Spleen (tissue), 13 donors: ENCODE measurements at regions of chr6 and their contacts with region 1.

Region 1: GRCh38 chr6:137799950-137800568 is 67.0 kb upstream of the TNFAIP3 start:
- DNase-seq: no peak
- H3K4me3 ChIP-seq: no peak overlapping the region
- H3K27ac ChIP-seq: no peak overlapping the region
- H3K4me1 ChIP-seq: peaks cover 0 to 34% (median 14%) of the 10 kb centered on the region in 6 donors
- H3K27me3 ChIP-seq: no peaks in the 10 kb centered on the region
- CTCF ChIP-seq: peak in 10 of 11 experiments; percentile 30 to 76 (median 64)
- POLR2A ChIP-seq: no peak

Region 2: GRCh38 chr6:137536104-137536773 is 263.8 kb before region 1 on chr6:
- intact Hi-C with region 1: no loop called
- DNase-seq: no peak
- H3K4me3 ChIP-seq: no peak overlapping the region
- H3K27ac ChIP-seq: peak overlapping the region in 1 of 8 donors; percentile 29
- H3K4me1 ChIP-seq: no peaks in the 10 kb centered on the region
- H3K27me3 ChIP-seq: peaks cover 0 to 54% (median 3%) of the 10 kb centered on the region in 7 donors
- CTCF ChIP-seq: no peak
- POLR2A ChIP-seq: no peak

Region 3: DNA sequence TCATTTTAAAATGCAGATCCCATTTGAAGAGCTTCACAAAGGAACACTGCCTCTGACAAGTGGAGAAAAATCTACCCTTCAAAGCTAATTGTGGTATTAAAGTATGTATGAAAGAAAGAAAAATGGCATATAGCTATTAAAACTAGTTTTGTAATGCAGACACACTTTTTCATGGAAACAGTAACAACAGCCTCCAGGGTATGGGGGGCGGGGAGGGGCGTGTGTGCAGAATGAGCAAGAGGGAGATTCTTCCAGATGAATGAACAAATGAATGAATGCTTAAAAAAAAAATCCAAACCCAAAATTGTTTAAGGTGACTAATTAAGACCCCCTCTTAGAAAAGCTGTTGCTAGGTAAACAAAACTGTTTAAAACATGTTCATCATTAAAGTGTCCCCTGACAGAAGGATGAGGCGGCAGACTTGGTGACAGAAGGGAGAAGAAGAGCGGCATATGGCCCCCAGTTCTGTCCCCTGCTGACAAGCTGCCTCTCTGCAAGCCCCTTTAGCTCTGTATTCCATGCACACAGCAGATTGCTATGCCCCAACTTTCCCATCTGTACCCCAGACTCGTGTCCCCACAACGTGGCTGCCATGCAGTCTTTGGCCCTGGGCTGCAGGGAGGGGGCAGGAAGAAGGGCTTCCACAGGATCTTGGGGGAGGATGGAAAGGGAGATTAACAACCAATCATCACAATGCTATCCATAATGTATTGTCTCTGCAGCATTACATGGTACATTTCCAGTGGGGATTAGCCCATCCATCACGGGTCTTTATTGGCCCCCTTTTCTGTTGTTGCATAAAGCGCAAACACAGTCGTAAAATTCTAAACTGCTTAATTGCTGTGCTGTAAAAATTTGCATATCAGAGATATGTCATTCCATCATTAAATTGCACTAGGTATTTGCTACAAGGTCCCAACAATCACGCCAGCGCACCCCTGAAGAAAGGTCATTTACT is 197.5 kb before region 1 on chr6:
- intact Hi-C with region 1: no loop called
- DNase-seq: no peak
- H3K4me3 ChIP-seq: no peak overlapping the region
- H3K27ac ChIP-seq: no peak overlapping the region
- H3K4me1 ChIP-seq: no peaks in the 10 kb centered on the region
- H3K27me3 ChIP-seq: peaks cover 0 to 50% (median 0%) of the 10 kb centered on the region in 7 donors
- CTCF ChIP-seq: no peak
- POLR2A ChIP-seq: no peak

Region 4: DNA sequence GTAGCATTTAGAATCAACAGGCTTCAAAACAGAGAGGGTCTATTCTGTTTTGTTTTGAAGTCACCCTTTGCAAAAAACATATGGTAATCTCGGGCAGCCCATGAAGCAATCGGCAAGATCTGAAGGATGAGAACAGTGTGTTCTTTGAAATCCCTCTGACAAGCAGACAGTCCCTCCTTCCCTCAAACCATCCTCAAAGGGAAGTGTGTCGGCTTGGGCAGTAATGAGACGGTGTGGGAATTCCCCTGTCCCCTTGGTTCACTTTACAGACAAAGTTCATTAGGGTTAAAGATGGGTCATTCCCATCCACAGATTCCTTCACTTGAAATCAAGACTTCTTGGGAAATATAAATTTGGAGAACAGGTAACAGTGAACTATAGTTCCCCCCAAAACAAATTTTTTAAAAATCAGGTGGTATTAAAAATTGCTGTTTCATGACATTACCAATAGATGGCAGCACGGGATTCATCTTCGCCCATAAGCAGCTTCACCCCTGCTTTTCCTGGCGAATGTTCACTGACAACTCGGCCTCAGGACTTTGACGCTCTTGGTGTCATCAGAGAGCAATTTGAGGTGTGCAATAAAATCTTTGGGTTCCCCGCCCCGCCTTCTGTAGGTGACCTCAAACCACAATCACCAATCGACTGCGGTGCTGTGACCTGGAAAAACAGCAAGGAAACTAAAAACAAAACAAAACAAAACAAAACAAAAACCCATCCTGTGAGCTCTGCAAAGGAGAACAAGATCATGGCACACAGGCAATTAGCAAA is 92.3 kb before region 1 on chr6:
- intact Hi-C with region 1: loop called (anchors 10 kb)
- DNase-seq: peak; percentile 80
- H3K4me3 ChIP-seq: peak overlapping the region in 3 of 8 donors; percentile 8 to 36 (median 10)
- H3K27ac ChIP-seq: peak overlapping the region in 7 of 8 donors; percentile 9 to 77 (median 43)
- H3K4me1 ChIP-seq: peaks cover 12 to 56% (median 33%) of the 10 kb centered on the region in 6 donors
- H3K27me3 ChIP-seq: no peaks in the 10 kb centered on the region
- CTCF ChIP-seq: peak; percentile 41 to 88 (median 74)
- POLR2A ChIP-seq: no peak

Region 5: GRCh38 chr6:137736048-137736818 is 63.8 kb before region 1 on chr6:
- intact Hi-C with region 1: no loop called
- DNase-seq: no peak
- H3K4me3 ChIP-seq: no peak overlapping the region
- H3K27ac ChIP-seq: peak overlapping the region in 1 of 8 donors; percentile 86
- H3K4me1 ChIP-seq: peaks cover 0 to 52% (median 8%) of the 10 kb centered on the region in 6 donors
- H3K27me3 ChIP-seq: no peaks in the 10 kb centered on the region
- CTCF ChIP-seq: no peak
- POLR2A ChIP-seq: no peak

Region 6: DNA sequence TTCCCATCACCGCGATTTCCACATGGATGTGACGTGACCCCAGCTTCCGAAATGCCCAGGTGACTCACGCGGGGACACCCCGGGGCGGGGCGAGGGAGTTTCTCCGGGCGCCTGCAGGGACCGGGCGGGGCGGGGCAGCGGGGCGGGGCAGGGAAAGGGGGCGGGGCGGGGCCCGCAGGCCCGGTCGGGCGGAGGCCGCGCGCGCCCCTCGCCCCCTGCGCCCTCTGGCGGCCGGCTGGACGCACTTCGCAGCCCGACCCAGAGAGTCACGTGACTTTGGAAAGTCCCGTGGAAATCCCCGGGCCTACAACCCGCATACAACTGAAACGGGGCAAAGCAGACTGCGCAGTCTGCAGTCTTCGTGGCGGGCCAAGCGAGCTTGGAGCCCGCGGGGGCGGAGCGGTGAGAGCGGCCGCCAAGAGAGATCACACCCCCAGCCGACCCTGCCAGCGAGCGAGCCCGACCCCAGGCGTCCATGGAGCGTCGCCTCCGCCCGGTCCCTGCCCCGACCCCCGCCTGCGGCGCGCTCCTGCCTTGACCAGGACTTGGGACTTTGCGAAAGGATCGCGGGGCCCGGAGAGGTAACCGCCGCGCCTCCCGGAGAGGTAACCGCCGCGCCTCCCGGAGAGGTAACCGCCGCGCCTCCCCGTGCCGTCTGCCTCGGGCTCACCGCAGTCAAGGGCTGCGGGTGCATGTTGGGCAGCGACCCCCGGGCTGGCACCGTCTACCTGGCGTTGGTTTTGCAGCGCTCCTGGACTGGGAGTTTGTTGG is 67.0 kb after region 1 on chr6 and contains the start of gene TNFAIP3:
- intact Hi-C with region 1: loop called (anchors 10 kb)
- DNase-seq: peak; percentile 98
- H3K4me3 ChIP-seq: peak within 1 kb of the TSS; percentile 83 to 97 (median 86)
- H3K27ac ChIP-seq: peak within 1 kb of the TSS; percentile 88 to 99 (median 97)
- H3K4me1 ChIP-seq: peaks cover 31 to 58% (median 48%) of the 10 kb centered on the region in 6 donors
- H3K27me3 ChIP-seq: no peaks in the 10 kb centered on the region
- CTCF ChIP-seq: peak; percentile 78 to 97 (median 93)
- POLR2A ChIP-seq: peak; percentile 80 to 96 (median 90)
- total RNA-seq, gene TNFAIP3: 41.1 to 133 (median 69.0) TPM

Region 7: GRCh38 chr6:137944793-137945498 is 144.9 kb after region 1 on chr6:
- intact Hi-C with region 1: loop called (anchors 10 kb)
- DNase-seq: no peak
- H3K4me3 ChIP-seq: peak overlapping the region in 1 of 8 donors; percentile 26
- H3K27ac ChIP-seq: peak overlapping the region in 2 of 8 donors; percentile 23 to 25
- H3K4me1 ChIP-seq: peaks cover 0 to 39% (median 14%) of the 10 kb centered on the region in 6 donors
- H3K27me3 ChIP-seq: no peaks in the 10 kb centered on the region
- CTCF ChIP-seq: peak; percentile 45 to 83 (median 78)
- POLR2A ChIP-seq: no peak